CD14-positive monocyte (primary cell): ENCODE measurements at regions of chr2 and their contacts with region 1.

Region 1: DNA sequence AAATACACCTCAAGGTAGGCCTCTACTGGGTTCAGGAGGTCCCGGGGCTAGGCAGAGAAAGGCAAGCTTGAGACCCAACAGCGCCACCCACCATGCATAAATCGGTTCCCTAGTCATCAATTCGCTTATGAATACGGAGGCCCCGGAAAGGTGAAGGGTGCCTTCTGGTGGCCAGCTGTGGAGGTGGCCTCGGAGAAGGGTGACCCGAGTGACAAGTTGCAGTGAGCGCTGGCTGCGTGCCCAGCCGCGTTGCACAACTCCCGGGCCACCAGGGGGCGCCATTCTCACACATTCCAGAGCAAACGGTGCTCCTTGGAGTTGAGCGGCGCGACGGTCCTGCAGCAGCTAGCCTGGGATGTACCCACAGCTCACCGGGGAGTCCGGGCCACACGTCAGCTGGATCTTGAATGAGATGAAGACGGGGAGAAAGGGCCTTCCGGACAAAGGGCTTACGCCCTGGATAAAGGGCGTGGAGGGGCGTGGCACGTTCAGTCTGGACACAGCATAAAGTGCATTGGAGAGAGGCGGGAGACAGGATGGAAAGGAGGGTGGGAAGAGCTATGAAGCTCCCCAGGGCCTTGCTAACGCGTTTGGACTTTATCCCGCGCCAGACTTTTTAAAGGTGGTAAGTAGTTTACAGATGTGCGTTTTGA is 20.4 kb downstream of the TMSB10 start:
- DNase-seq: peak; percentile 95 to 98 (median 96)
- H3K4me3 ChIP-seq: peak overlapping the region in 2 of 3 experiments; percentile 6 to 73
- H3K4me3 Mint-ChIP-seq: peak overlapping the region; percentile 76 to 92
- H3K27ac ChIP-seq: no peak overlapping the region
- H3K27ac Mint-ChIP-seq: peak overlapping the region; percentile 45 to 84 (median 80)
- H3K4me1 ChIP-seq: peaks cover 32 to 36% of the 10 kb centered on the region in 2 donors
- H3K4me1 Mint-ChIP-seq: peaks cover 30% of the 10 kb centered on the region
- H3K27me3 ChIP-seq: no peaks in the 10 kb centered on the region
- H3K27me3 Mint-ChIP-seq: peaks cover 7 to 14% (median 9%) of the 10 kb centered on the region in 3 donors
- CTCF ChIP-seq: peak; percentile 98

Region 2: GRCh38 chr2:84495539-84496146 is 430.2 kb before region 1 on chr2:
- intact Hi-C with region 1: loop called in 1 of 2 experiments (anchors 2 kb)
- DNase-seq: peak; percentile 31 to 54 (median 49)
- H3K4me3 ChIP-seq: no peak overlapping the region
- H3K4me3 Mint-ChIP-seq: no peak overlapping the region
- H3K27ac ChIP-seq: no peak overlapping the region
- H3K27ac Mint-ChIP-seq: no peak overlapping the region
- H3K4me1 ChIP-seq: no peaks in the 10 kb centered on the region
- H3K4me1 Mint-ChIP-seq: peaks cover 4% of the 10 kb centered on the region
- H3K27me3 ChIP-seq: no peaks in the 10 kb centered on the region
- H3K27me3 Mint-ChIP-seq: peaks cover 0 to 7% (median 5%) of the 10 kb centered on the region in 3 donors
- CTCF ChIP-seq: peak; percentile 79

Region 3: GRCh38 chr2:84881581-84882414 is 44.1 kb before region 1 on chr2:
- intact Hi-C with region 1: loop called in 1 of 2 experiments (anchors 5 kb)
- DNase-seq: peak; percentile 58 to 67 (median 63)
- H3K4me3 ChIP-seq: peak overlapping the region; percentile 27 to 77 (median 45)
- H3K4me3 Mint-ChIP-seq: peak overlapping the region; percentile 89 to 99
- H3K27ac ChIP-seq: no peak overlapping the region
- H3K27ac Mint-ChIP-seq: peak overlapping the region in 1 of 7 donors; percentile 32
- H3K4me1 ChIP-seq: peaks cover 22 to 27% of the 10 kb centered on the region in 2 donors
- H3K4me1 Mint-ChIP-seq: peaks cover 30% of the 10 kb centered on the region
- H3K27me3 ChIP-seq: peaks cover 23 to 34% of the 10 kb centered on the region in 2 donors
- H3K27me3 Mint-ChIP-seq: peaks cover 44 to 56% (median 54%) of the 10 kb centered on the region in 3 donors
- CTCF ChIP-seq: peak; percentile 80

Region 4: GRCh38 chr2:84963692-84964405 is 38.0 kb after region 1 on chr2:
- intact Hi-C with region 1: loop called in 1 of 2 experiments (anchors 5 kb)
- DNase-seq: peak; percentile 61 to 86 (median 72)
- H3K4me3 ChIP-seq: peak overlapping the region in 1 of 3 experiments; percentile 14
- H3K4me3 Mint-ChIP-seq: peak overlapping the region in 1 of 2 donors; percentile 77
- H3K27ac ChIP-seq: peak overlapping the region; percentile 34 to 72
- H3K27ac Mint-ChIP-seq: peak overlapping the region; percentile 63 to 95 (median 91)
- H3K4me1 ChIP-seq: peaks cover 68 to 69% of the 10 kb centered on the region in 2 donors
- H3K4me1 Mint-ChIP-seq: peaks cover 71% of the 10 kb centered on the region
- H3K27me3 ChIP-seq: no peaks in the 10 kb centered on the region
- H3K27me3 Mint-ChIP-seq: peaks cover 0 to 3% (median 0%) of the 10 kb centered on the region in 3 donors
- CTCF ChIP-seq: no peak

Region 5: DNA sequence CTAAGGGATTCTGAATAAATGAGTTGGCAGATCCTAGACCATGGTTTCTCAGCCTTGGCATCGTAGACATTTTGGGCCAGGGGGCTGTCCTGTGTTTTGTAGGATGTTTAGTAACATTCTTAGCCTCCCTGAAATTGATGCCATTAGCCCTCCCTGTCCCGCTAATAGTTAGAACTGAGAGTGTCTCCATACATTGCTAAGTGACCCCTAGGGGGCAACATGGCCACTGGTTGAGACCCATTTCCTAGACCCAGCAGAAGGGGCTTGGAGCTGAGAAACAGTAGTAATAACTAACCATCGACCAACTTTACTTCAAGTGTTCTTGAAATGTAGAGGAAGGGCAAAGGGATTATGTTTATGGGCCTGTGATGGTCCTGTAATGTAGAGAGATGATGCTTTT is 85.9 kb after region 1 on chr2:
- intact Hi-C with region 1: no loop called
- DNase-seq: no peak
- H3K4me3 ChIP-seq: no peak overlapping the region
- H3K4me3 Mint-ChIP-seq: no peak overlapping the region
- H3K27ac ChIP-seq: peak overlapping the region in 1 of 2 donors; percentile 7
- H3K27ac Mint-ChIP-seq: peak overlapping the region in 3 of 7 donors; percentile 41 to 76 (median 46)
- H3K4me1 ChIP-seq: peaks cover 52 to 64% of the 10 kb centered on the region in 2 donors
- H3K4me1 Mint-ChIP-seq: peaks cover 78% of the 10 kb centered on the region
- H3K27me3 ChIP-seq: no peaks in the 10 kb centered on the region
- H3K27me3 Mint-ChIP-seq: peaks cover 0 to 1% (median 0%) of the 10 kb centered on the region in 3 donors
- CTCF ChIP-seq: no peak